ENCODE measurements at regions of chr6 and their contacts with region 1.

Region 1: DNA sequence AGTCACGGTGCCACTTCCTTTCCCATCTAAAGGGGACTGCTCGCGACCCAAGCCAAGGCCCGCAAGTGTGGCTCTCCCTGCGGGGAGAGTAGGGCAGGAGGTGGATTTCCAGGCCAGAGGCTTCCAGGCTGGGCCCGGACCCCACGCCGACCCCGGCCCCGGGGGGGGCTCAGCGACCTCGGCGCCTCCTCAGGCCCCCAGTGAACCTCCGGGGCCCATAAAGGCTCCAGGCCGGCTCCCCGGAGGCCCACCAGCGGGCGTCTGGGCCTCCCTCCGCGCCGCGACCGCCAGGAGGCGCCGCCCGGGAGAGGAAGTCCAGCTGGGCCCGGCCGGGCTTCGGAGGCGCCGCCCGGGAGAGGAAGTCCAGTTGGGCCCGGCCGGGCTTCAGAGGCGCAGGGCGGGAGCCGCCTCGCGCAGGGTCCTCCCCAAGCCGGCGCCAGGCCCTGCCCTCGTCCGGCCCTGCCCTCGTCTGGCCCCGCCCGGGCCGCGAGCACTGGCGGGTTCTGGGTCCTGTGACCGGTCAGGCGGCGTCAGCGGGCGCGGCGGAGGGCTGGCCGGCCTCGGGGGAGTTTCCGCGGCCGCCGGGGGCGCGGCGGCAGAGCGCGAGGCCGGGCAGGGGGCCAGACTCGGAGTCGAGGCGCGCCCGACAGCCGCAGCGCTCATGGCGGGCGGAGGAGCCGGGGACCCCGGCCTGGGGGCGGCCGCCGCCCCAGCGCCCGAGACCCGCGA is at the start of gene RAB32:
- DNase-seq: peak; percentile 89
- ATAC-seq: peak; percentile 97
- H3K4me3 ChIP-seq: peak within 1 kb of the TSS; percentile 70 to 95 (median 90)
- H3K27ac ChIP-seq: peak within 1 kb of the TSS; percentile 89
- H3K4me1 ChIP-seq: peaks cover 30% of the 10 kb centered on the region
- H3K27me3 ChIP-seq: no peaks in the 10 kb centered on the region; a peak in 1 of 5 replicates
- CTCF ChIP-seq: peak; percentile 74
- EP300 ChIP-seq: peak in 1 of 2 experiments; percentile 6; a peak in 1 of 4 replicates
- POLR2A ChIP-seq: peak in 1 of 2 experiments; percentile 81; a peak in 3 of 4 replicates
- RAD21 ChIP-seq: peak; percentile 97
- total RNA-seq, gene RAB32: 93.9 and 101 TPM in 2 replicates

Region 2: GRCh38 chr6:145734486-145735355 is 808.7 kb before region 1 on chr6:
- CTCF ChIA-PET with region 1: no interaction called
- POLR2A ChIA-PET with region 1: no interaction called
- in situ Hi-C with region 1: no loop called
- intact Hi-C with region 1: loop called (anchors 10 kb)
- DNase-seq: peak; percentile 94
- ATAC-seq: peak; percentile 93
- H3K4me3 ChIP-seq: peak overlapping the region; percentile 70 to 78 (median 75)
- H3K27ac ChIP-seq: peak overlapping the region; percentile 96
- H3K4me1 ChIP-seq: peaks cover 24% of the 10 kb centered on the region
- H3K27me3 ChIP-seq: no peaks in the 10 kb centered on the region
- CTCF ChIP-seq: 0 out of 2 replicates have a peak, but pooled peaks have one; percentile 20
- EP300 ChIP-seq: peak; percentile 42 to 50; a peak in 1 of 4 replicates
- POLR2A ChIP-seq: peak; percentile 79 to 93
- RAD21 ChIP-seq: peak; percentile 61

Region 3: GRCh38 chr6:145963216-145964068 is 579.9 kb before region 1 on chr6:
- CTCF ChIA-PET with region 1: no interaction called
- POLR2A ChIA-PET with region 1: interaction called, 8 read pairs
- in situ Hi-C with region 1: no loop called
- intact Hi-C with region 1: loop called (anchors 5 kb)
- DNase-seq: no peak
- ATAC-seq: peak; percentile 80
- H3K4me3 ChIP-seq: peak overlapping the region; percentile 64 to 87 (median 78)
- H3K27ac ChIP-seq: peak overlapping the region; percentile 88
- H3K4me1 ChIP-seq: peaks cover 31% of the 10 kb centered on the region
- H3K27me3 ChIP-seq: no peaks in the 10 kb centered on the region; a peak in 1 of 5 replicates
- CTCF ChIP-seq: 0 out of 2 replicates have a peak, but pooled peaks have one; percentile 3
- EP300 ChIP-seq: no peak
- POLR2A ChIP-seq: peak; percentile 70
- RAD21 ChIP-seq: no peak; the same call in 1 of the 2 replicates

Region 4: DNA sequence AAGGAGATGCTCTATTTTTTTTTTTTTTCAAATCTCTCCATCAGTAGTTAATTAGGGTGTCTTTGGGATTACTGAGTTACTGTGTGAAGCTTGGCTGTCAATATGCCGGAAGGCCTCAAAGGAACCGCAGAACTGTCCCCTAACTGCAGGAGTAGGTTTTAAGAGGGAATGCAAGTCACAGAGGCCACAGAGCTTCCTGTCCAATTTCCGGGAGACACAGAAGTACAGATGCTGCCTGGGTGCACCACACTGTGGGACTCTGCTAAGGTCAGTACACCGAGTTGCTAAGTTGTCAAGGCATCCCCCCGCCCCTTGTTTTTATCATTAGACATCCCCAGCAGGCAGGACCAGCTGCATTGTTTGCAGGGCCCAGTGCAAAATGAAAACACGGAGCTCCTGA is 119.9 kb before region 1 on chr6:
- CTCF ChIA-PET with region 1: no interaction called
- POLR2A ChIA-PET with region 1: no interaction called
- in situ Hi-C with region 1: no loop called
- intact Hi-C with region 1: no loop called
- DNase-seq: no peak
- ATAC-seq: no peak
- H3K4me3 ChIP-seq: no peak overlapping the region
- H3K27ac ChIP-seq: no peak overlapping the region
- H3K4me1 ChIP-seq: no peaks in the 10 kb centered on the region
- H3K27me3 ChIP-seq: no peaks in the 10 kb centered on the region
- CTCF ChIP-seq: no peak
- EP300 ChIP-seq: no peak
- POLR2A ChIP-seq: no peak
- RAD21 ChIP-seq: no peak

Region 5: DNA sequence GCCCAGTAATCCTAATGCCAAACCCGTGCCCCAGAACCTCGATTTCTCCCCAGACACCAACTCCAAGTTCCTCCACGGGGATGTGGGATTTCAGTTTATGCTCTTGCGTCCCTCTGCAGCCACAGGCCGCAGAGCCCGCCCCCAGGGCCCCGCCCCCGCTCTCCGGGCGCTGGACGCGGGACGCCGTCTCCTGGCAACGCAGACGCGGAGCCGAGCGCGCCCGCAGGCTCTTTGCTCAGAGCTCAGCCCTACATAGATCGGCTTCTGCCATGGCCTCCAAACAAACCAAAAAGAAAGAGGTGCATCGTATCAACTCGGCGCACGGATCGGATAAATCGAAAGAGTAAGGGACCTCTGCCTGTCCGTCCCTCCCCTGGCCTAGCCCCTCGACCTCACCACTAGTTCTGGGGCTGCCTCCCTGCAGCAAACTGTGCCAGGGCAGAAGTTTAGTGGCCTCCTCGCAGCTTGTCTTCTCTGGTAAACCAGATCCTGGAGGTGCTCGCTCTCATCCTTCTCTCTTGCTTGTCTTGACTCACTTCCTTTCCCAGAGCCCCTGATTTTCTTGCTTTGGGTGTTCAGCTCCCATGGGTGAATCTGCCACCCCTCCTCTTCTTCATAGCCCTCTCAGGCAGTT is 55.5 kb after region 1 on chr6 and contains the start of gene ADGB:
- CTCF ChIA-PET with region 1: no interaction called
- POLR2A ChIA-PET with region 1: interaction called, 3 read pairs
- in situ Hi-C with region 1: no loop called
- intact Hi-C with region 1: loop called (anchors 5 kb)
- DNase-seq: peak; percentile 36
- ATAC-seq: peak; percentile 100
- H3K4me3 ChIP-seq: peak within 1 kb of the TSS; percentile 11 to 51 (median 24); a peak in 3 of 6 replicates
- H3K27ac ChIP-seq: no peak within 1 kb of the TSS
- H3K4me1 ChIP-seq: peaks cover 5% of the 10 kb centered on the region; the same call in 1 of the 2 replicates
- H3K27me3 ChIP-seq: no peaks in the 10 kb centered on the region; a peak in 1 of 5 replicates
- CTCF ChIP-seq: no peak
- EP300 ChIP-seq: no peak
- POLR2A ChIP-seq: no peak
- RAD21 ChIP-seq: no peak
- total RNA-seq, gene ADGB: not detected in 2 replicates

Region 6: DNA sequence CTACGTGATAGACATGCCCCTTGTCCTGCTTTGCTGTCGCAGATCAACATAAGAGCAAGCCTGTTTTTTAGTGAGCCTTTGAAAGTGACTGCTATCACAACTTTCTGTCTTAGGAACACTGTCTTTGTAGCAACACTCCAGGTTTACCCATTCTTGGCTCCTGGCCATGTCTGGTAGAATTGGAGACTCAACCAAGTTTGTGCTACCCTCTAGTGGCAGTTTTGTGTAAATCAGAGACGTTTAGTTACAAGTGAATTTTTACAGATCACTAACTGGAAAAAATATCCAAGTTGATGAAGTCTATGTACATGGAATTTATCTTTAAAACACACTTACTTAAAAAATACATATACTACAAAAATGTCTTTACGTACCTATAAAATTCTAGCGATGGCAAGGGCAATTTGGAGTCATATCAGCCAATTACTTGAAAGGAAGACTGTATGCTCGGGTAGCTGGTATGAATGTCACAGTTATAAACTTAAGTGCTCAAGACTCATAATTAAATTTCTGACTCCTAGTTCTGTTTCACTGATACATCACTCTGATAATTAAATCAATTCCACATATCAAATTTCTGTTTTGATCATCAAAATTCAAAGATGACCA is 156.8 kb after region 1 on chr6:
- CTCF ChIA-PET with region 1: interaction called, 22 read pairs
- POLR2A ChIA-PET with region 1: interaction called, 3 read pairs
- in situ Hi-C with region 1: loop called (anchors 5 kb)
- intact Hi-C with region 1: loop called (anchors 1 kb)
- DNase-seq: peak; percentile 84
- ATAC-seq: peak; percentile 87
- H3K4me3 ChIP-seq: no peak overlapping the region
- H3K27ac ChIP-seq: no peak overlapping the region
- H3K4me1 ChIP-seq: no peaks in the 10 kb centered on the region
- H3K27me3 ChIP-seq: no peaks in the 10 kb centered on the region
- CTCF ChIP-seq: peak; percentile 89
- EP300 ChIP-seq: no peak
- POLR2A ChIP-seq: no peak
- RAD21 ChIP-seq: peak; percentile 75

Region 7: DNA sequence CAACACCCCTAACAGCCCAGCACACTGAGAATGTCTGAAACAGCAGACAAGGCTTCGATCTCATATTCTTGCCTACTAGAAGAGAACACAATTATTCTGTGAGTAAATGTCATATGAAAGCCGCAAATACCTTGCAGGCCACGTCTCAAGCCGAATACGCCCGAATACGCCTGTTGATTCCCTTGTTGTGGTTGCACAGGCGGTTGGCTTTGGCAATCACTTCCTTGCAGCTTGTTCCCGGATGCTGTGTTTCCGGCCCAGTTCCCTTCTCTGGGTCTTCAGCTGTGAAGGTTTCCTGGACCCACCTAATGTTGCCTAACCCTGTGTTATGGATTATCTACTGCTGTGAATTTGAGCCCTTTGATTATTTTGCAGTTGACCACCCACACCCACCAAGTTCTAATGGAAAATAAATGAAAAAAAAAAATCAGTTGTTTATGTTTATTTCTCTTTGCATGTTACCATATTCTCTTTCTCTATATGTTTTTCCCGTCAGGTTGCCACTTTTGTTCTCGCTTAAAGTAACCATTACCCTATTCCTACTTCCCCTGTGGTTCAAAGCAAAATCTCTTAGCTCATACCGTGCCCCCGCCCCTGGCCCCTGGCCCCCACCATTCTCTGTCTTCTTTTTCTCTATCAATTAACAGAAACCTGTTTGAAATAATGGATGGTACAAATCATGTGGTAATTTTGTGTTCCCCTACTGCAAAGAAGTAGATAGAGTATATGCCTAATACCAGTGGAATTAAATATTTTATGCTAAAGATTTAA is 227.8 kb after region 1 on chr6:
- CTCF ChIA-PET with region 1: no interaction called
- POLR2A ChIA-PET with region 1: no interaction called
- in situ Hi-C with region 1: no loop called
- intact Hi-C with region 1: loop called (anchors 1 kb)
- DNase-seq: no peak
- ATAC-seq: no peak
- H3K4me3 ChIP-seq: no peak overlapping the region
- H3K27ac ChIP-seq: no peak overlapping the region
- H3K4me1 ChIP-seq: no peaks in the 10 kb centered on the region
- H3K27me3 ChIP-seq: no peaks in the 10 kb centered on the region
- CTCF ChIP-seq: no peak
- EP300 ChIP-seq: no peak
- POLR2A ChIP-seq: no peak
- RAD21 ChIP-seq: no peak

Region 8: GRCh38 chr6:147194652-147195411 is 651.5 kb after region 1 on chr6:
- CTCF ChIA-PET with region 1: no interaction called
- POLR2A ChIA-PET with region 1: no interaction called
- in situ Hi-C with region 1: no loop called
- intact Hi-C with region 1: loop called (anchors 10 kb)
- DNase-seq: no peak
- ATAC-seq: no peak
- H3K4me3 ChIP-seq: no peak overlapping the region
- H3K27ac ChIP-seq: no peak overlapping the region
- H3K4me1 ChIP-seq: peaks cover 20% of the 10 kb centered on the region
- H3K27me3 ChIP-seq: no peaks in the 10 kb centered on the region; a peak in 1 of 5 replicates
- CTCF ChIP-seq: no peak
- EP300 ChIP-seq: no peak
- POLR2A ChIP-seq: no peak
- RAD21 ChIP-seq: no peak